ENCODE measurements at regions of chr2 and their contacts with region 1.

Region 1: GRCh38 chr2:126264625-126265024 is 391.3 kb upstream of the GYPC start:
- DNase-seq: no peak
- ATAC-seq: no peak
- H3K4me3 ChIP-seq: no peak overlapping the region
- H3K4me3 Mint-ChIP-seq: no peak overlapping the region
- H3K27ac ChIP-seq: no peak overlapping the region
- H3K27ac Mint-ChIP-seq: no peak overlapping the region
- H3K4me1 ChIP-seq: no peaks in the 10 kb centered on the region
- H3K4me1 Mint-ChIP-seq: no peaks in the 10 kb centered on the region
- H3K27me3 ChIP-seq: peaks cover 0 to 2% of the 10 kb centered on the region in 2 experiments
- H3K27me3 Mint-ChIP-seq: peaks cover 18% of the 10 kb centered on the region
- CTCF ChIP-seq: no peak

Region 2: DNA sequence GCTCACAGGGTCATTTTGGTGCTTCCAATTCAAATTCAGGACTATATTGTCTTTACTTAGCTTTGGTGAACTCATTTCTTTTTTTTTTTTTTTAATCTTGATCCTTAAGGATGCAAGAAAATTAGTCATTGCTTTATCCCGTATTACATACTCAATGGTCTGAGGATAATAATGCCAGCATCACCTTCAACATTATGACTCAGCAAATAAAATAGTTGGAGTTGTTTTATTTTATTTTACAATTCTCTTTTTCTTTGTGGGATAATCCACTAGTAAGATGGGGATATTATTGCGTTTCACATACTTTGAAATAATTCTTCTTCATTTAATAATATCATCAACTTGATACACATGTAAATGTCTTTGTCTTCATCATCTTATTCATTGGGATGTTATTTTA is 563.6 kb before region 1 on chr2:
- CTCF ChIA-PET with region 1: no interaction called
- POLR2A ChIA-PET with region 1: no interaction called
- intact Hi-C with region 1: loop called in 1 of 2 experiments (anchors 5 kb)
- DNase-seq: no peak
- ATAC-seq: no peak
- H3K4me3 ChIP-seq: no peak overlapping the region
- H3K4me3 Mint-ChIP-seq: no peak overlapping the region
- H3K27ac ChIP-seq: no peak overlapping the region
- H3K27ac Mint-ChIP-seq: no peak overlapping the region
- H3K4me1 ChIP-seq: no peaks in the 10 kb centered on the region
- H3K4me1 Mint-ChIP-seq: no peaks in the 10 kb centered on the region
- H3K27me3 ChIP-seq: no peaks in the 10 kb centered on the region
- H3K27me3 Mint-ChIP-seq: no peaks in the 10 kb centered on the region
- CTCF ChIP-seq: no peak

Region 3: GRCh38 chr2:126719833-126720351 is 455.3 kb after region 1 on chr2:
- CTCF ChIA-PET with region 1: no interaction called
- POLR2A ChIA-PET with region 1: no interaction called
- intact Hi-C with region 1: no loop called
- DNase-seq: peak in 1 of 9 experiments; percentile 5
- ATAC-seq: no peak
- H3K4me3 ChIP-seq: no peak overlapping the region
- H3K4me3 Mint-ChIP-seq: no peak overlapping the region
- H3K27ac ChIP-seq: no peak overlapping the region
- H3K27ac Mint-ChIP-seq: no peak overlapping the region
- H3K4me1 ChIP-seq: no peaks in the 10 kb centered on the region
- H3K4me1 Mint-ChIP-seq: peaks cover 4% of the 10 kb centered on the region
- H3K27me3 ChIP-seq: no peaks in the 10 kb centered on the region
- H3K27me3 Mint-ChIP-seq: no peaks in the 10 kb centered on the region
- CTCF ChIP-seq: no peak